GM12878 (cell line): ENCODE measurements at regions of chr11 and their contacts with region 1.

Region 1: GRCh38 chr11:47552566-47553416 is at the start of gene CELF1:
- DNase-seq: peak; percentile 50
- ATAC-seq: peak; percentile 95
- H3K4me3 ChIP-seq: peak within 1 kb of the TSS; percentile 83
- H3K27ac ChIP-seq: peak within 1 kb of the TSS; percentile 46
- H3K4me1 ChIP-seq: peaks cover 10% of the 10 kb centered on the region; the same call in 1 of the 2 replicates
- H3K27me3 ChIP-seq: no peaks in the 10 kb centered on the region
- CTCF ChIP-seq: peak; percentile 75 to 95 (median 90); a peak in 5 of 6 replicates
- EP300 ChIP-seq: no peak
- POLR2A ChIP-seq: peak; percentile 88
- RAD21 ChIP-seq: peak; percentile 23; the same call in 1 of the 2 replicates
- polyA plus RNA-seq, gene CELF1: 35.3 to 41.5 TPM

Region 2: DNA sequence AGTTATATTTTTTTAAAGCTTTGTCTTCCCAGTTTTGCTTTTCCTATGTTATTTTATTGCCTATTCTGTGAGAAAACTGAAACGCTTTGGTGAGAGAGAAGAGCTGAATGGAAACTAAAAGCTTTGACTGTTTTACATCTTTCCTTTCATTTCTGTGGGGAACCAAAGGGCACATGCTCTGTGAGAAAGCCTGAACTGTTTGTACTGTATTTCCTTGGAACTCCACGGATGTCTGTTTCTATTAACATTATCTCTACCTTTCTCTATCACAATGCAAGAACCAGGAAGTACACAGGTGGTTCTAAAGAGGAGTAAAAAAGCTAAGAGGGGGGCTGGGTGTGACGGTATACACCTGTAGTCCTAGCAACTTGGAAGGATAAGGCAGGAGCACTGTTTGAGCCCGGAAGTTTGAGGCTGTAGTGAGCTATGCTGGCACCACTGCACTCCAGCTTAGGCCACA is 43.7 kb before region 1 on chr11:
- CTCF ChIA-PET with region 1: interaction called, 22 read pairs
- POLR2A ChIA-PET with region 1: interaction called, 6 read pairs
- RAD21 ChIA-PET with region 1: interaction called, 14 read pairs
- SMC1A ChIA-PET with region 1: interaction called, 40 read pairs
- in situ Hi-C with region 1: no loop called
- intact Hi-C with region 1: no loop called
- DNase-seq: no peak
- ATAC-seq: peak; percentile 31
- H3K4me3 ChIP-seq: peak overlapping the region; percentile 38; the same call in 1 of the 2 replicates
- H3K27ac ChIP-seq: peak overlapping the region; percentile 86
- H3K4me1 ChIP-seq: peaks cover 66% of the 10 kb centered on the region
- H3K27me3 ChIP-seq: no peaks in the 10 kb centered on the region
- CTCF ChIP-seq: no peak
- EP300 ChIP-seq: no peak
- POLR2A ChIP-seq: no peak
- RAD21 ChIP-seq: no peak

Region 3: GRCh38 chr11:47514825-47515647 is 37.8 kb before region 1 on chr11:
- CTCF ChIA-PET with region 1: interaction called, 22 read pairs
- POLR2A ChIA-PET with region 1: interaction called, 6 read pairs
- RAD21 ChIA-PET with region 1: interaction called, 14 read pairs
- SMC1A ChIA-PET with region 1: interaction called, 40 read pairs
- in situ Hi-C with region 1: no loop called
- intact Hi-C with region 1: loop called (anchors 5 kb)
- DNase-seq: no peak
- ATAC-seq: peak; percentile 69
- H3K4me3 ChIP-seq: peak overlapping the region; percentile 12; the same call in 1 of the 2 replicates
- H3K27ac ChIP-seq: peak overlapping the region; percentile 62
- H3K4me1 ChIP-seq: peaks cover 71% of the 10 kb centered on the region
- H3K27me3 ChIP-seq: no peaks in the 10 kb centered on the region
- CTCF ChIP-seq: no peak
- EP300 ChIP-seq: no peak
- POLR2A ChIP-seq: no peak
- RAD21 ChIP-seq: no peak

Region 4: GRCh38 chr11:47523468-47524225 is 29.1 kb before region 1 on chr11:
- CTCF ChIA-PET with region 1: interaction called, 3 read pairs
- POLR2A ChIA-PET with region 1: interaction called, 12 read pairs
- RAD21 ChIA-PET with region 1: interaction called, 3 read pairs
- SMC1A ChIA-PET with region 1: interaction called, 5 read pairs
- in situ Hi-C with region 1: no loop called
- intact Hi-C with region 1: loop called (anchors 5 kb)
- DNase-seq: no peak
- ATAC-seq: peak; percentile 85
- H3K4me3 ChIP-seq: peak overlapping the region; percentile 29; the same call in 1 of the 2 replicates
- H3K27ac ChIP-seq: peak overlapping the region; percentile 37
- H3K4me1 ChIP-seq: peaks cover 48% of the 10 kb centered on the region
- H3K27me3 ChIP-seq: no peaks in the 10 kb centered on the region
- CTCF ChIP-seq: no peak
- EP300 ChIP-seq: no peak
- POLR2A ChIP-seq: no peak
- RAD21 ChIP-seq: no peak

Region 5: DNA sequence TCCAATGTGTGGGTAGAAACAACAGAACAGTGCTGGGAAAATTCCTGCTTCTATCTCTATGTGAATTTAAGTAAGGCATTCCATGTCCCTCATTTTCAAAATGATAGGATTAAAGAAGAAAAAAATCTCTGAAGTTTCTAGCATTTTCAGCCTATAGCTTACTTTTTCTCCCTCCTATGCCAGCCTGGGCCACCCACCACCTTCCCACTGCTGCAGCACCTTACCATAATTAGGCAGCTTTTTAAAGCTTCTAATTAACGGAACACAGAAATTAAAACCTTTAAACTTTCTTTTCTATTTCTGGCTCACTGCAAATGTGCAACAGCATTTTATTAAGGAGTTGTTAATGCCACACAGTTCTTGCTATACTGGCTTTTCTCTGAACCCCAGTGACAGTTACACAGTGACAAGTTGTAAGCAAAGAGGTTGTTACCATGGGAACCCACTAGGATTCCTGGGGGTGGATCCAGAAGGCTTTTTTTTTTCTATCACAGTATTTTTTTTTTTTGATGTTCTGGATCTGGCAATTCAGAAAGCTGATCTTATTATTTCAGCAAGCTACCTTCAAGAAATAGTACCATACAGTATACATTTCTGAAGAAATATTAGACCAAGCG is 20.1 kb before region 1 on chr11:
- CTCF ChIA-PET with region 1: interaction called, 15 read pairs
- POLR2A ChIA-PET with region 1: interaction called, 16 read pairs
- RAD21 ChIA-PET with region 1: interaction called, 3 read pairs
- SMC1A ChIA-PET with region 1: interaction called, 7 read pairs
- in situ Hi-C with region 1: no loop called
- intact Hi-C with region 1: no loop called
- DNase-seq: no peak
- ATAC-seq: no peak
- H3K4me3 ChIP-seq: no peak overlapping the region
- H3K27ac ChIP-seq: no peak overlapping the region
- H3K4me1 ChIP-seq: no peaks in the 10 kb centered on the region; the same call in 1 of the 2 replicates
- H3K27me3 ChIP-seq: no peaks in the 10 kb centered on the region
- CTCF ChIP-seq: no peak
- EP300 ChIP-seq: no peak
- POLR2A ChIP-seq: no peak
- RAD21 ChIP-seq: no peak

Region 6: DNA sequence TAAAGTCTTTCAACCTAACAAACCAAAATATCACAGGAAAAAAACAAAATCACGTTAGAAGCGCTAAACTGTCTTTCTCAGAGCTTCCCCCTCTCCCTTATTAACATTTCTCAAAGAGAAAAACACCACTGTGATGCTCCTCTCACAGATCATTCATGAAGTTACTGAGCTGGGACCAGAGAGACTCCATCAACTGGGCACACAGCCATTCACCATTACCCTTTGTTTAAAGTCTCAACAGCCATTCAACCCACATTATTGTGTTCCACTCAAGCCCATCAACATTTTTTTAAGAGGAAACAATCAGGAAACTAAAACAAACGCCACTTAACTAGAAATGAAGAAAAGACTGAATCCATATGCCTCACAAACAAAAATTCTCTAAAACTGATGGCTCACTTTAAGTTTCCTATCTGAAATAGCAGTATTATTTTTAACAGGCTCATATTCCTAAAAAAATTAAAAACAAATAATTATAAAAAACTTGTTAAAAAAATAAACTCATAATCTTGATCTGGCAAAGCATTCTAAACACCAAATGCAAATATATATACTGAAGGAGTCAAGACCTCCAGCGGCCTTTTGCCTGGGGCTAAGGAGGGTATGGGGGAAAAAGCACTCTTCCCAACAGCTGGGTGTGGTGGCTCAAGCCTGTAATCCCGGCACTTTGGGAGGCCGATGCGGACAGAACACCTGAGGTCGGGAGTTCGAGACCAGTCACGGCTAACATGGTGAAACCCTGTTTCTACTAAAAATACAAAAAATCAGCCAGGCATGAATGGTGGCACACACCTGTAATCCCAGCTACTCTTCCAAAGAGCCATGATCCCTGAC is 13.8 kb before region 1 on chr11:
- CTCF ChIA-PET with region 1: interaction called, 15 read pairs
- POLR2A ChIA-PET with region 1: interaction called, 16 read pairs
- RAD21 ChIA-PET with region 1: interaction called, 3 read pairs
- SMC1A ChIA-PET with region 1: interaction called, 14 read pairs
- in situ Hi-C with region 1: no loop called
- intact Hi-C with region 1: no loop called
- DNase-seq: no peak
- ATAC-seq: no peak
- H3K4me3 ChIP-seq: no peak overlapping the region
- H3K27ac ChIP-seq: no peak overlapping the region
- H3K4me1 ChIP-seq: peaks cover 8% of the 10 kb centered on the region
- H3K27me3 ChIP-seq: no peaks in the 10 kb centered on the region
- CTCF ChIP-seq: no peak
- EP300 ChIP-seq: no peak
- POLR2A ChIP-seq: no peak
- RAD21 ChIP-seq: no peak

Region 7: DNA sequence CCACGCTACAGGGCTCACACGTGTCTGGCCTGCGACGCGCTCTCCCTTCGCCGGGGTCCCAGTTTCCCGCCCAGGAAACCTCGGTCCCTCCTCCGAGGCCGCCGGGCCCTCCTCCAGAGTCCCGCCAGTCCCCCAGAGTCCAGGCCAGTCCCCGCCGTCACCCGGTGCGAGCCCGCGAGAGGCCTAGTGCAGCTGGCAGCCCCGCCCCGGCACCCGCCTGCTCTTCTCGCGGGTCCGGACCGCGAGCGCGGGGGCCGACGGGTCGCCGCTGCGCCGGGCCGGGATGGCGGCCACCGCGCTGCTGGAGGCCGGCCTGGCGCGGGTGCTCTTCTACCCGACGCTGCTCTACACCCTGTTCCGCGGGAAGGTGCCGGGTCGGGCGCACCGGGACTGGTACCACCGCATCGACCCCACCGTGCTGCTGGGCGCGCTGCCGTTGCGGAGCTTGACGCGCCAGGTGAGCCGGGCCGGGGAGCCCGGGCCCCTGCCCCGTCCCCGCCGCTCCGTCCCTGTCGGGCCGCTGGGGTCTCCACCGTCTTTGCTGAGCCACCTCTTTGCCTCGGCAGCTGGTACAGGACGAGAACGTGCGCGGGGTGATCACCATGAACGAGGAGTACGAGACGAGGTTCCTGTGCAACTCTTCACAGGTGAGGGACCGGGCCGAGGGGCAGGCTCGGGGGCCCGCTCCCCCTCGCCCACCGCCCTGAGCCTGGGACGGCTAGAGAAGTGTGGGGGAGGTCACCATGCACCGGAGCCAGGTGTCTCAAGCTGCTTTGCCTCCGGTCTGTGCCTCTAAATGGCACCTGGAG is 12.8 kb after region 1 on chr11 and contains the start of gene PTPMT1:
- CTCF ChIA-PET with region 1: interaction called, 20 read pairs
- POLR2A ChIA-PET with region 1: interaction called, 8 read pairs
- RAD21 ChIA-PET with region 1: interaction called, 8 read pairs
- SMC1A ChIA-PET with region 1: interaction called, 6 read pairs
- in situ Hi-C with region 1: no loop called
- intact Hi-C with region 1: no loop called
- DNase-seq: no peak
- ATAC-seq: peak; percentile 97
- H3K4me3 ChIP-seq: peak within 1 kb of the TSS; percentile 94
- H3K27ac ChIP-seq: peak within 1 kb of the TSS; percentile 58
- H3K4me1 ChIP-seq: no peaks in the 10 kb centered on the region; the same call in 1 of the 2 replicates
- H3K27me3 ChIP-seq: no peaks in the 10 kb centered on the region
- CTCF ChIP-seq: no peak
- EP300 ChIP-seq: no peak
- POLR2A ChIP-seq: peak; percentile 95
- RAD21 ChIP-seq: no peak
- polyA plus RNA-seq, gene PTPMT1: 12.0 to 26.1 TPM